Right lobe of liver (tissue), 6 donors: ENCODE measurements at regions of chr5 and their contacts with region 1.

Region 1: DNA sequence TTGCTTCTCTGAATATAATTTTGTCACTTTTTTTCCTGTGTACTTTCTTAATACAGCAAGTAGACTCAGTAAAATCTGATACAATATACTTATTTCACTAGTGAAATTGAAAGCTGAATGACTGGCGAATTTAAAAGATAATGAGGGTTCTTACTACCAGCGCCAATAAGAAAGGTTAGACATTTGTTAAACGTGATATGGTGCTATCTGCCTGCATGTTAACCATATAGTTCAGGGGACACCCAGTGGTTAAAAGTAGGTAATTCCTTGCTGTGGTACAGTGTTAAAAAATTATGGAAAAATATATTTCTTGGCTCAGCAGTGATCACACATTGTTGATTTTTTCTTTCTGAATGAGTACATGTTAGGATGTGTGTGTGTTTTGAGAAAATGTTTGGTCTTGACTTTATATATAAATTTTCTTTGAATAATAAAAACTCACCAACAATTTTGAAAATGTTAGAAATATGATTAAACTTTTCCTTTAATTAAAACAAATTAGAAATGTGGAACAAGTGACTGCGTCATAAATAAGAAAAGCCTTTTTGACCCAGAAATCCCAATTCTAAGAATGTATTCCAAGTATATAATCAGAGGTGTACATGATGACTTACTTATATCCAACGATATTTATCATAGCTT is 25.8 kb downstream of the CAST start:
- DNase-seq: no peak
- ATAC-seq: peak; percentile 73 to 81 (median 77)
- H3K4me3 ChIP-seq: peak overlapping the region in 1 of 3 donors; percentile 17
- H3K27ac ChIP-seq: no peak overlapping the region
- H3K4me1 ChIP-seq: peaks cover 0 to 18% (median 6%) of the 10 kb centered on the region in 4 donors
- H3K27me3 ChIP-seq: no peaks in the 10 kb centered on the region
- CTCF ChIP-seq: peak; percentile 61 to 69 (median 64)
- POLR2A ChIP-seq: no peak

Region 2: GRCh38 chr5:96439477-96440184 is 248.3 kb before region 1 on chr5:
- intact Hi-C with region 1: no loop called
- DNase-seq: no peak
- ATAC-seq: peak in 1 of 4 donors; percentile 15
- H3K4me3 ChIP-seq: no peak overlapping the region
- H3K27ac ChIP-seq: no peak overlapping the region
- H3K4me1 ChIP-seq: no peaks in the 10 kb centered on the region
- H3K27me3 ChIP-seq: no peaks in the 10 kb centered on the region
- CTCF ChIP-seq: no peak
- POLR2A ChIP-seq: no peak

Region 3: DNA sequence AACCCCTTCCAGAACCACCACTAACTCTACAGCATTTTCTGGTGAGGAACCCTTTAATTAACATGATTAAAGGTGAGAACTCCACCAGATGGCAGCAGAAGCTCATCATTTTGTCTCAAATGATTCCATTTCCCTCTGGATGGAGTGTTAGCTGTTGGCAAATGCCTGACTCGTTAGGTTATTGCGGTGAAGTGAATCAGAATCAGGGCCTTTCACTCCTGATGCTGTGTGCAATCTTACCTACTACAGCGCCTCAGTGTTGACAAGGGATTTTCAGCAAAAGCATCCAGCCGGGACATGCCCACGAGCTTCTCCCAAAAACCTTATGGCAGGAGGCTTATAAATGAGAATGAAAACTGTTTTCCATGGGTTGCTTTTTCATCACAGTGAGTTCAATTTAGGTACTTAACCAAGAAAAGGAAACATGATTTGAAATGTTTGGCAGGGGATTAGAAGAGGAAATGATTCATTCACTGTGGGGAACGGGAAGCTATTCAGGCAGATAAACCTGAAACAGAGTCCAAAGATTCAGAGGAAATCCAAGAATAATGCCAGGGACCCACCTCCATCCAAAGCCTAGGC is 73.7 kb before region 1 on chr5:
- intact Hi-C with region 1: loop called in 1 of 2 experiments (anchors 10 kb)
- DNase-seq: peak in 1 of 3 donors; percentile 63
- ATAC-seq: peak; percentile 91 to 95 (median 94)
- H3K4me3 ChIP-seq: no peak overlapping the region
- H3K27ac ChIP-seq: peak overlapping the region in 1 of 3 donors; percentile 19
- H3K4me1 ChIP-seq: peaks cover 0 to 6% (median 0%) of the 10 kb centered on the region in 4 donors
- H3K27me3 ChIP-seq: no peaks in the 10 kb centered on the region
- CTCF ChIP-seq: peak; percentile 58 to 82 (median 60)
- POLR2A ChIP-seq: no peak

Region 4: GRCh38 chr5:96629774-96630173 is 58.2 kb before region 1 on chr5:
- intact Hi-C with region 1: loop called in 1 of 2 experiments (anchors 10 kb)
- DNase-seq: no peak
- ATAC-seq: no peak
- H3K4me3 ChIP-seq: no peak overlapping the region
- H3K27ac ChIP-seq: no peak overlapping the region
- H3K4me1 ChIP-seq: no peaks in the 10 kb centered on the region
- H3K27me3 ChIP-seq: no peaks in the 10 kb centered on the region
- CTCF ChIP-seq: no peak
- POLR2A ChIP-seq: no peak